ENCODE measurements at regions of chr1 and their contacts with region 1.

Region 1: GRCh38 chr1:204398217-204399081 is 13.2 kb downstream of the PPP1R15B start:
- DNase-seq: peak; percentile 93 to 96
- ATAC-seq: peak; percentile 92 to 99
- H3K4me3 ChIP-seq: no peak overlapping the region
- H3K27ac ChIP-seq: no peak overlapping the region
- H3K4me1 ChIP-seq: peaks cover 7% of the 10 kb centered on the region; the same call in 2 of the 3 replicates
- CTCF ChIP-seq: peak; percentile 88
- EP300 ChIP-seq: no peak
- POLR2A ChIP-seq: no peak
- RAD21 ChIP-seq: peak; percentile 71 to 72

Region 2: DNA sequence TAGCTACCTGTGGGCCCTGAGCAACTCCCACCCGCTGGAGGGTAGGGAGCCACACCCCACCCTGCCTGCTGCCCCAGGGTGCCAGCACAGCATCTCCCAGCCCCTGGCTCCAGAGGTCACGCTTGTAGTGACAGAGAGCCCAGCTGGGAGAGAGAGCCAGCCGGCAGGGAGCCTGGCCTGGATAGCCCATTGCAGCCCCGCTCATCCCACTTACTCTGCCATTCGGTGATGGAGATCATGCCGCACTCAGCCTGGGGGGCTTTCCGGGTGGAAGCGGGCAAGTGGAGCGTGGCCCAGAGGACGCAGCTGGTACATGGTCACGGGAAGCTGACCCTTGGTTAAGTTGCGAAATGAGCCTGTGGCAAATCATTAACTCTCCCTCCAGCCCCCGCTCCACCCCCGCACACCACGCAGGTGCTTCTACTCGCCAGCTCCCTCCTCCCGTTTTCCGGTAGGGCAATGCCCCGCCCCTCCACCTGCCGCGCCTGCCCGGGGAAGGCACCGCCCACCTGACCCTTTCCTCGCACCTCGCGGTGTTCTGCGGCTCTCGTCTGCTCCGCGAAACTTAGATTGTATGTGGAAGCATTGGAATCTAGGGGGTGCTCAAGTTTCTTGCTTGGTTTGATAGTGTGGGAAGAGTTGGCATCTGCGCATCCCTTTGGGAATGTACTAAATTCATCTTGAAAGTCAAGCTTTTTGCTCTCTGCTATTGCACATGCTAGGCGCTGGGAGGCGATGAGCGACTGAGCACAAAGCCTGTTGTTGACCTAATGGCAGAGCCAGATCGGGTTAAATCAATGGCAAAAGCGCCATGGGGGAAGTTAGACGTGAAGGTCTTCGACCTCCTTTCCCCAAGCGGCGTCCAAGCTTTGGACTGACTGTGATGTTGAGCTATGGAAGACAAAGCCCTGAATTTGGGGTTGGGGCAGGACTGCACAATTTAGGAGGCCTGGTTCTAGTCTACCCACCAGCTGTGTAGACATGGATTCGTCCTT is 184.5 kb before region 1 on chr1 and contains the start of gene GOLT1A:
- CTCF ChIA-PET with region 1: interaction called, 18 read pairs
- POLR2A ChIA-PET with region 1: no interaction called
- DNase-seq: peak; percentile 78 to 91
- ATAC-seq: peak; percentile 88 to 92
- H3K4me3 ChIP-seq: peak within 1 kb of the TSS; percentile 54
- H3K27ac ChIP-seq: peak within 1 kb of the TSS; percentile 73 to 88
- H3K4me1 ChIP-seq: peaks cover 6% of the 10 kb centered on the region; the same call in 2 of the 3 replicates
- CTCF ChIP-seq: peak; percentile 84
- EP300 ChIP-seq: no peak
- POLR2A ChIP-seq: no peak
- RAD21 ChIP-seq: peak; percentile 85 to 86
- polyA plus RNA-seq, gene GOLT1A: 6.4 and 6.8 TPM in 2 replicates

Region 3: GRCh38 chr1:204323887-204324286 is 74.6 kb before region 1 on chr1:
- CTCF ChIA-PET with region 1: no interaction called
- POLR2A ChIA-PET with region 1: no interaction called
- DNase-seq: peak; percentile 44 to 45
- ATAC-seq: peak; percentile 31 to 41; a peak in 2 of 6 replicates
- H3K4me3 ChIP-seq: no peak overlapping the region
- H3K27ac ChIP-seq: peak overlapping the region; percentile 46 to 66; a peak in 5 of 6 replicates
- H3K4me1 ChIP-seq: peaks cover 53% of the 10 kb centered on the region
- CTCF ChIP-seq: no peak
- EP300 ChIP-seq: no peak
- POLR2A ChIP-seq: no peak
- RAD21 ChIP-seq: no peak

Region 4: GRCh38 chr1:204335085-204335484 is 63.4 kb before region 1 on chr1:
- CTCF ChIA-PET with region 1: no interaction called
- POLR2A ChIA-PET with region 1: no interaction called
- DNase-seq: no peak
- ATAC-seq: no peak
- H3K4me3 ChIP-seq: no peak overlapping the region
- H3K27ac ChIP-seq: 0 out of 6 replicates have a peak overlapping the region, but pooled peaks of 1 of the 2 experiments have one; percentile 10
- H3K4me1 ChIP-seq: peaks cover 43% of the 10 kb centered on the region
- CTCF ChIP-seq: no peak
- EP300 ChIP-seq: no peak
- POLR2A ChIP-seq: no peak
- RAD21 ChIP-seq: no peak

Region 5: GRCh38 chr1:204368996-204369726 is 29.3 kb before region 1 on chr1:
- CTCF ChIA-PET with region 1: interaction called, 34 read pairs
- POLR2A ChIA-PET with region 1: no interaction called
- DNase-seq: no peak
- ATAC-seq: no peak
- H3K4me3 ChIP-seq: no peak overlapping the region
- H3K27ac ChIP-seq: no peak overlapping the region
- H3K4me1 ChIP-seq: peaks cover 3% of the 10 kb centered on the region; the same call in 2 of the 3 replicates
- CTCF ChIP-seq: no peak
- EP300 ChIP-seq: no peak
- POLR2A ChIP-seq: no peak
- RAD21 ChIP-seq: no peak

Region 6: GRCh38 chr1:204384994-204385352 is 13.5 kb before region 1 on chr1:
- CTCF ChIA-PET with region 1: interaction called, 94 read pairs
- POLR2A ChIA-PET with region 1: interaction called, 7 read pairs
- DNase-seq: no peak
- ATAC-seq: peak; percentile 35 to 41; a peak in 4 of 6 replicates
- H3K4me3 ChIP-seq: no peak overlapping the region
- H3K27ac ChIP-seq: no peak overlapping the region
- H3K4me1 ChIP-seq: 0 out of 3 replicates have a peak, but pooled peaks cover 2% of the 10 kb centered on the region
- CTCF ChIP-seq: no peak
- EP300 ChIP-seq: no peak
- POLR2A ChIP-seq: no peak
- RAD21 ChIP-seq: no peak

Region 7: GRCh38 chr1:204417231-204417997 is 19.0 kb after region 1 on chr1:
- CTCF ChIA-PET with region 1: interaction called, 28 read pairs
- POLR2A ChIA-PET with region 1: interaction called, 7 read pairs
- DNase-seq: peak; percentile 94 to 97
- ATAC-seq: peak; percentile 91 to 96
- H3K4me3 ChIP-seq: peak overlapping the region; percentile 42
- H3K27ac ChIP-seq: peak overlapping the region; percentile 98 to 100
- H3K4me1 ChIP-seq: peaks cover 76% of the 10 kb centered on the region
- CTCF ChIP-seq: no peak
- EP300 ChIP-seq: peak in 1 of 2 experiments; percentile 38; a peak in 2 of 5 replicates
- POLR2A ChIP-seq: no peak
- RAD21 ChIP-seq: no peak

Region 8: GRCh38 chr1:204431310-204432165 is 33.1 kb after region 1 on chr1:
- CTCF ChIA-PET with region 1: interaction called, 20 read pairs
- POLR2A ChIA-PET with region 1: no interaction called
- DNase-seq: peak; percentile 79
- ATAC-seq: peak; percentile 82 to 95
- H3K4me3 ChIP-seq: no peak overlapping the region
- H3K27ac ChIP-seq: peak overlapping the region; percentile 28 to 51; a peak in 4 of 6 replicates
- H3K4me1 ChIP-seq: peaks cover 22% of the 10 kb centered on the region
- CTCF ChIP-seq: peak; percentile 92
- EP300 ChIP-seq: no peak
- POLR2A ChIP-seq: 0 out of 2 replicates have a peak, but pooled peaks have one; percentile 10
- RAD21 ChIP-seq: peak; percentile 72

Region 9: DNA sequence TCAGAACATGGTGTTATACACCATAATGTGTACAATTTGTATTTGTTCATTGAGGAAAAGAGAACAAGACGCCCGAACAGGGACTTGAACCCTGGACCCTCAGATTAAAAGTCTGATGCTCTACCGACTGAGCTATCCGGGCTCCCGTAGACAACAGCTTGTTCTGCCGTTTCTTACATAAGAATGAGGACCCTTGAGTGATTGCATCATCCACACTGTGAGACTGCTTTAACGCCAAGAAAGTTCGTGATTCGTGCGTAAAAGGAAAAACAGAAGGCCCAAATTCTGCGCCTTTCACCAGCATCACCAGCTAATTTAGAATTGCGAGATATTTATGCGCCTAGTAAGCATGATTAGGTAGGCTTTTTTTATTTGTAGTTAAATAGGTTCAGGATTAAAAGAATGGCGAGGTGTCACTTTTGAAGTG is 108.5 kb after region 1 on chr1:
- CTCF ChIA-PET with region 1: interaction called, 34 read pairs
- POLR2A ChIA-PET with region 1: interaction called, 4 read pairs
- DNase-seq: peak; percentile 35 to 93
- ATAC-seq: peak; percentile 79 to 87
- H3K4me3 ChIP-seq: peak overlapping the region; percentile 53
- H3K27ac ChIP-seq: peak overlapping the region; percentile 78 to 89
- H3K4me1 ChIP-seq: peaks cover 21% of the 10 kb centered on the region
- CTCF ChIP-seq: no peak
- EP300 ChIP-seq: no peak
- POLR2A ChIP-seq: no peak
- RAD21 ChIP-seq: no peak

Measured in A549 (cell line).